Activated CD8-positive, alpha-beta T cell treated with anti-CD3 and anti-CD28 coated beads, Interleukin-2, amount 10 ng/mL, durations not matched to agents 7 days and 5 days (primary cell): ENCODE measurements at regions of chr17 and their contacts with region 1.

Region 1: DNA sequence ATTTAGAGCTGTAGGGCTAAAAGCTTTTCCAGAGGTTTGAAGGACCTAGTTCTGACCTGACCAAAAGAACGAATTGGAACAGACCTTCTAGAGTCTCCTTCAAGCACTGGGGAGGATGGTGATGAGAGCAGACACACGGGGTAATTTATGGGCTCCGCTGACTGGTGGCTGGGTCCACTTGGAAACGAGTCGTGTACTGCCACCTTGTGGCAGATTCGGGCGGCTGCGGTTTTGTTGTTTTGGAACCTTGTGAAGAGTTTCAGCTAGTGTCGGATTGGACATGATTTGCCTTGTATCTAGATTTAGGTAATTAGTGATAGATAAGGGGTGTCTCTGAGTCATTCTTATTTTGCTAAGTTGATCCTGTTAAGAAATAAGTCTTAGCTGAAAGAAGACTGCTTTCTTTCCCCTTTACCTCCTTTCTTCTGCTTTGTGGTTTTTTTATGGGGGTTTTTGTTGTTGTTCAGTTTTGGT is 98.9 kb downstream of the AATF start:
- DNase-seq: peak; percentile 88
- ATAC-seq: peak; percentile 81
- H3K4me3 Mint-ChIP-seq: no peak overlapping the region
- H3K27ac Mint-ChIP-seq: no peak overlapping the region
- H3K4me1 Mint-ChIP-seq: peaks cover 12% of the 10 kb centered on the region
- H3K27me3 Mint-ChIP-seq: no peaks in the 10 kb centered on the region

Region 2: GRCh38 chr17:36629252-36629847 is 418.3 kb before region 1 on chr17:
- CTCF ChIA-PET with region 1: interaction called, 20 read pairs
- POLR2A ChIA-PET with region 1: no interaction called
- DNase-seq: peak; percentile 83
- ATAC-seq: peak; percentile 83
- H3K4me3 Mint-ChIP-seq: no peak overlapping the region
- H3K27ac Mint-ChIP-seq: no peak overlapping the region
- H3K4me1 Mint-ChIP-seq: no peaks in the 10 kb centered on the region
- H3K27me3 Mint-ChIP-seq: peaks cover 14% of the 10 kb centered on the region

Region 3: DNA sequence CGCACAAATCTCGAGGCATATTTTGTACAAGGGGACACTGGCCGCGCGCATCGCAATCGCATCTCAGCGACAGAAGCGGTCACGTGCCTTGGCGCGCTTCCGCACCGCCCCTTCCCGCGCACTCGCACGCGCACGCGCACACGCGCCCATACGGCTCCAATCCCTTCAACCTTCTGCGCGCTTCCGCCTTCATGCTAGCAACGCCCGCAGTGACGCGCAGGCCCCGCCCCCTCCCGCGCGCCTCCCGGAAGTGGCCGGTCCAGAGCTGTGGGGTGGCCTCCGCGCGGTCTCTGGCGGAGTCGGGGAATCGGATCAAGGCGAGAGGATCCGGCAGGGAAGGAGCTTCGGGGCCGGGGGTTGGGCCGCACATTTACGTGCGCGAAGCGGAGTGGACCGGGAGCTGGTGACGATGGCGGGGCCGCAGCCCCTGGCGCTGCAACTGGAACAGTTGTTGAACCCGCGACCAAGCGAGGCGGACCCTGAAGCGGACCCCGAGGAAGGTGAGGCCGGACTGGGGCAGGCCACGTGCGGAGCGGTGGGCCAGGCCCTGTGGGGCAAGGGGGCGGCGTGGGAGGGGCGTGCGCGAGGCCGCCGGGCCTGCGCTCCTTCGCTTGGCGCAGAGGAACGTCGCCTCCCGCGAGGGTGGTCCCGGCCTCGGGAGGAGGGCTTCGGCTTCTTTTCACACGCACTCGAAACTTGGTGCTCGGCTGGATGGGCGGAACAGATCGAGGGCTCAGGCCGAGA is 98.8 kb before region 1 on chr17 and contains the start of gene AATF:
- CTCF ChIA-PET with region 1: interaction called, 25 read pairs
- POLR2A ChIA-PET with region 1: interaction called, 4 read pairs
- DNase-seq: peak; percentile 97
- ATAC-seq: peak; percentile 96
- H3K4me3 Mint-ChIP-seq: peak within 1 kb of the TSS; percentile 96
- H3K27ac Mint-ChIP-seq: peak within 1 kb of the TSS; percentile 98
- H3K4me1 Mint-ChIP-seq: peaks cover 59% of the 10 kb centered on the region
- H3K27me3 Mint-ChIP-seq: peaks cover 32% of the 10 kb centered on the region
- total RNA-seq, gene AATF: 69.8 to 72.9 TPM

Region 4: GRCh38 chr17:37019117-37019740 is 28.4 kb before region 1 on chr17:
- CTCF ChIA-PET with region 1: interaction called, 12 read pairs
- POLR2A ChIA-PET with region 1: no interaction called
- DNase-seq: no peak
- ATAC-seq: no peak
- H3K4me3 Mint-ChIP-seq: no peak overlapping the region
- H3K27ac Mint-ChIP-seq: no peak overlapping the region
- H3K4me1 Mint-ChIP-seq: peaks cover 3% of the 10 kb centered on the region
- H3K27me3 Mint-ChIP-seq: no peaks in the 10 kb centered on the region

Region 5: DNA sequence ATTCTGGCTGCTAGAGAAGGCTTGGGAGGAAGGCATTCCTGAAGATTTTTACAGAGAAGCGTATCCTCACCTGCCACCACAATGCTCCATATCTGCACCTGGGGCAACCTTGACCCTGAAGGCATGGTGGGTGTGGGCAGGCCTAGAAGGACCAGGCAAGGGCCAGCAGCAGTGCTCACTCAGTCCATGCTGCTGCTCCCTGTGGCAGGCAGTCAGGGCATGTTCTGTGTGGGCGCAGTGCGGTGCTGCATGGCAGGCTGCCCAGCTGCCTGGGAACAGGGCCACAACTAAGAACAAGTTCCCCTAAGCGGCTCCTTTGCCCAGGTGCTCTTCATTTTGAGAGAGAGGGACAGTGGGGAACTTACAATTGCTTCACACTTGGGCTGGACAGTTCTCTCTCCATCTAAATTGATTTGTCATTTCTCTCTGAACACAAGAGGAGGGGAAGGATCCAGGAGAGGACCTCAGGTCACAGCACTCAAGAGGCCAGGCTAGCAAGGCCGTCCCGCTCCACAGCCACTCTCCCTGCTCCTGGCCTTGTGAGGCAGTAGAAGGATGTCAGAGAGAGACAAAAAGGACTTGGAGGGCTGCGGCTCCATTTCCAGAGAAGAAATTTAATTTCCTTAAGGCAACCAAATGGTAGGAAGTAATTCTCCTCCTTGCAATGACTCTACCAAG is 59.9 kb after region 1 on chr17:
- CTCF ChIA-PET with region 1: no interaction called
- POLR2A ChIA-PET with region 1: no interaction called
- DNase-seq: no peak
- ATAC-seq: peak; percentile 30
- H3K4me3 Mint-ChIP-seq: no peak overlapping the region
- H3K27ac Mint-ChIP-seq: no peak overlapping the region
- H3K4me1 Mint-ChIP-seq: no peaks in the 10 kb centered on the region
- H3K27me3 Mint-ChIP-seq: no peaks in the 10 kb centered on the region

Region 6: GRCh38 chr17:37239690-37240334 is 192.1 kb after region 1 on chr17:
- CTCF ChIA-PET with region 1: interaction called, 17 read pairs
- POLR2A ChIA-PET with region 1: no interaction called
- DNase-seq: peak; percentile 23
- ATAC-seq: no peak
- H3K4me3 Mint-ChIP-seq: no peak overlapping the region
- H3K27ac Mint-ChIP-seq: no peak overlapping the region
- H3K4me1 Mint-ChIP-seq: no peaks in the 10 kb centered on the region
- H3K27me3 Mint-ChIP-seq: no peaks in the 10 kb centered on the region